GM12878 (cell line): ENCODE measurements at regions of chr2 and their contacts with region 1.

Region 1: DNA sequence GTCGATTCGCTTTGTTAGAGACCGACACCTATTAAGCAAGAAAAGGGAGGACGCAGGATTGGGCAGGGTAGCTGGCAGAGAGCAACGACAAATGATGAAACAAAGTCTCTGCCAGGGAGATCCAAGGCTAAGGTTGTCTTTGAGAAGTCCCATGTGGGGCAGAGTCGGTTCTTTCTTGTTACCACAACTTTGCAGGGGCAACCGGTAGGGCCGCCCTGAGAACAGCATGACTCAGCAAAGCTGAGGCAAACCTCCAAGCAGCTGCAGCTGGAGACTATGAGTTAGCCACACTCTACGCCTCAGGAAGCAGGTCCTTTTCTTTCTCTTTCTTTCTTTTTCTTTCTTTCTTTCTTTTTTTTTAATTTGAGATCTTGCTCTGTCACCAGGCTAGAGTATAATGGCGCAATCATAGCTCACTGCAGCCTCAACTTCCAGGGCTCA is 452.3 kb upstream of the ID2 start:
- DNase-seq: no peak
- ATAC-seq: peak; percentile 92
- H3K4me3 ChIP-seq: no peak overlapping the region
- H3K27ac ChIP-seq: peak overlapping the region; percentile 35
- H3K4me1 ChIP-seq: peaks cover 24% of the 10 kb centered on the region
- H3K27me3 ChIP-seq: no peaks in the 10 kb centered on the region
- CTCF ChIP-seq: no peak
- EP300 ChIP-seq: peak in 1 of 2 experiments; percentile 68; a peak in 2 of 4 replicates
- POLR2A ChIP-seq: no peak
- RAD21 ChIP-seq: no peak; the same call in 1 of the 2 replicates

Region 2: DNA sequence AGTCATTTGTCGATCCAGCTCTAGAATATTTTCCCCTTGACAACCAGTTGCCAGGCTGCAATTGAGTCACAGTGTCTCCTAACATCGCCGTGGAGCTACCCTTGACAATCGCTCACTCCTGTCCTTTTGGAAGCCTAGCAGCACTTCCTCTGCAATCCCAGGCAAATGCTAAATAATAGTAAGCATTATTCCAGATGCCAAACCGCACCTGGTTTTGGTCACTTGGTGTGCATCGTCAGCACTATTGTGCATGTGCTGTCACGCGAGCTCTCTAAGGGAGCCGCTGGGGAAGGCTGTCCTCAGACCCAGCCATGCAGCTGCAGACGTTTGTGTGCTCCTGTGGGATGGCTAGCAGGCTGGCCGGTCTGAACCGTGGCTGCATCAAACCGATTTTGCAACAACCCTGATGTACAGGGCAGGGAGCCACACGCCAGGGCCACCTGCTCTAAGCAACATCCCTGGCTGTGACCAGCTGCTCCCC is 97.2 kb before region 1 on chr2:
- CTCF ChIA-PET with region 1: no interaction called
- POLR2A ChIA-PET with region 1: no interaction called
- RAD21 ChIA-PET with region 1: no interaction called
- SMC1A ChIA-PET with region 1: no interaction called
- in situ Hi-C with region 1: no loop called
- intact Hi-C with region 1: no loop called
- DNase-seq: no peak
- ATAC-seq: no peak
- H3K4me3 ChIP-seq: no peak overlapping the region
- H3K27ac ChIP-seq: no peak overlapping the region
- H3K4me1 ChIP-seq: no peaks in the 10 kb centered on the region
- H3K27me3 ChIP-seq: no peaks in the 10 kb centered on the region
- CTCF ChIP-seq: no peak
- EP300 ChIP-seq: no peak
- POLR2A ChIP-seq: no peak
- RAD21 ChIP-seq: no peak

Region 3: DNA sequence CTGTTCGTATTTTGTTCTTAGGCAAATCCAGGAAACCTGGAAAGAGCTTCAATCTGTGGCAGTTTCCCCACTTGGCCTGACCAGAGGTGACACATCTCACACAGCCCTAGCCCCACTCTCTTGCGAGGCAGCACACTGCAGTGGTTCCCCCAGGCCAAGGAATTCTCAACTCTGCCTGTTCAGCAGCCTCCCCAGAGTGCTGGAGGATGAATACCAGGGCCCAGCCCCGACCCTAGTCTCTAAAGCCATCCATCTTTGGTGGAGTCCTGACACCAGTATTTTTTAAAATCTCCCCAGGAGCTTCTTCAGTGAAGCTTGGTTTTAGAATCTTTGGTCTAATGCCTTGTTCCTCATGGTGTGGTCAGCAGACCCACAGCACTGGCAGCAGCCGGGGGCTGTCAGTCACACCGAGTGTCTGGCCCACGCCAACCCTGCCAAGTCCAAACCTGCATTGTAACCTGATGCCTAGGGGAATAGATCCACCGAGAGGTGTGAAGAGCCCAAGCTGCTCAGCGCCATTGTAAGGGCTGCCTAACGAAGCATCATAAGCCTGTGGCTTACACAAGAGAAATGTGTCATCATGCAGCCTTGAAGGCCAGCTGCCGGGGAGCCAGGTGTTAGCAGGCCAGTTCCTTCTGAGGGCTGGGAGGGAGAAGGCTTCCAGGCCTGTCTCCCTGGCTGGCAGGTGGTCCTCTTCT is 23.6 kb after region 1 on chr2:
- CTCF ChIA-PET with region 1: interaction called, 3 read pairs
- POLR2A ChIA-PET with region 1: interaction called, 10 read pairs
- RAD21 ChIA-PET with region 1: interaction called, 23 read pairs
- SMC1A ChIA-PET with region 1: interaction called, 125 read pairs
- in situ Hi-C with region 1: no loop called
- intact Hi-C with region 1: no loop called
- DNase-seq: peak; percentile 48
- ATAC-seq: peak; percentile 98
- H3K4me3 ChIP-seq: no peak overlapping the region
- H3K27ac ChIP-seq: no peak overlapping the region
- H3K4me1 ChIP-seq: peaks cover 20% of the 10 kb centered on the region
- H3K27me3 ChIP-seq: no peaks in the 10 kb centered on the region
- CTCF ChIP-seq: no peak
- EP300 ChIP-seq: peak; percentile 38 to 47; a peak in 1 of 4 replicates
- POLR2A ChIP-seq: no peak
- RAD21 ChIP-seq: no peak